Breast epithelium (tissue), 4 donors: ENCODE measurements at regions of chr10 and their contacts with region 1.

Region 1: DNA sequence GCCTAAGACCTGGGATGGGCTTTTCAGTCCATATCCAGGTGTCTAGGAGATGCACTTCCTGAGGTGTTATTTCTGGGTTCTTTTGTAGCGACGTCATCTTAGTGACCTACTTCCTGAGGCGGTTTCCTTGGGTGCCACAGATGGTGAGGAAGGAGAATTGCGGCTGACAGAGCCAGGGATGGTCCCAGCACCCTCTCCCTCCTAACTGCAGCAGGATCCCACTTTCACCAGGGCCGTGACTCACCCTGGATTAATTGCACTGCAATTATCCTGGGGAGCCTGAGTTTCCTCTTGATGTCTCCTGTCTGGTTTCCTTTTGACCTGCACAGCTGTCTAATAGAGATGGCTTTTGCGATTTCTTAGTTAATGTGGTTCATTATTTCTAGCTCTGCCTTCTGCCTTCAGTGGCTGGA is 271.7 kb downstream of the TCF7L2 start:
- DNase-seq: no peak
- H3K4me3 ChIP-seq: no peak overlapping the region
- H3K27ac ChIP-seq: no peak overlapping the region
- H3K4me1 ChIP-seq: no peaks in the 10 kb centered on the region
- H3K27me3 ChIP-seq: no peaks in the 10 kb centered on the region
- CTCF ChIP-seq: no peak
- POLR2A ChIP-seq: no peak

Region 2: GRCh38 chr10:112859763-112860162 is 362.0 kb before region 1 on chr10:
- intact Hi-C with region 1: no loop called
- DNase-seq: no peak
- H3K4me3 ChIP-seq: no peak overlapping the region
- H3K27ac ChIP-seq: no peak overlapping the region
- H3K4me1 ChIP-seq: no peaks in the 10 kb centered on the region
- H3K27me3 ChIP-seq: no peaks in the 10 kb centered on the region
- CTCF ChIP-seq: no peak
- POLR2A ChIP-seq: no peak

Region 3: DNA sequence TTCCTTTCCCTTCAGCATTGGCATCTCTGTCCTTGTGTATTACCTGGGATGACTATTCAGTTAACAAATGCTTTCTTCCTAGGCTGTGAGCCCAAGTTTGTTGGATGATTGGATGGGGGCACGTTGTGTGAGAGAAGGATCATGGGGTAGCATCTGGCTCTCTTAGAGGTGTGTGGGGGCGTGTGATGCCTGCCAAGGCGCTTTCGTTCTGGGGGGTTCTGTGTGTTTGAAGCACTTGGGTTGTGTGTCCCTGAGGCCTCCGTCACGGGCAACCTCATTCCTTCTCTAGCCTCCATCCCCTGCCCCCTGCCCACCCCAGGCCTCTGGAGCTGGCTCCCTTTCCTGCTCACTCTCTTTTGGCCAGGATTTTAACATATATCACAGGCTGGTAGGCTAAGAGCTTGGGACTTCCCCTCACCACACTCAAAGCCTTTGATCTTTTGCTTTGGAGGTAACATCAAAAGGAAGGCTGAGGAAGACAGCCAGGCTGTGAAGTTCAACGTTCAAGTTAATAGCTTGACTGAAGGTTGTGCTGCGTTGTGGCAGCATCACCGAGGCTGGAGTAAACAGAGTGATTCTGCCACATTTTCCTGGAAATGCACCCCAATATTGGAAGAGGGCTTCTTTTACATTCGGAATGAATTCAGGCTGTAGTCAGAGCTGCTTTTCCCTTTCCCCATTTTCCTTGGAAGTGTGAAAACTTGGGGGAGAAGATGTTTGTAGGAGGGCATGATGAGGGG is 214.6 kb before region 1 on chr10:
- intact Hi-C with region 1: no loop called
- DNase-seq: no peak
- H3K4me3 ChIP-seq: peak overlapping the region in 1 of 3 donors; percentile 30
- H3K27ac ChIP-seq: peak overlapping the region; percentile 48 to 77
- H3K4me1 ChIP-seq: peaks cover 7 to 27% of the 10 kb centered on the region in 2 donors
- H3K27me3 ChIP-seq: no peaks in the 10 kb centered on the region
- CTCF ChIP-seq: no peak
- POLR2A ChIP-seq: no peak

Region 4: DNA sequence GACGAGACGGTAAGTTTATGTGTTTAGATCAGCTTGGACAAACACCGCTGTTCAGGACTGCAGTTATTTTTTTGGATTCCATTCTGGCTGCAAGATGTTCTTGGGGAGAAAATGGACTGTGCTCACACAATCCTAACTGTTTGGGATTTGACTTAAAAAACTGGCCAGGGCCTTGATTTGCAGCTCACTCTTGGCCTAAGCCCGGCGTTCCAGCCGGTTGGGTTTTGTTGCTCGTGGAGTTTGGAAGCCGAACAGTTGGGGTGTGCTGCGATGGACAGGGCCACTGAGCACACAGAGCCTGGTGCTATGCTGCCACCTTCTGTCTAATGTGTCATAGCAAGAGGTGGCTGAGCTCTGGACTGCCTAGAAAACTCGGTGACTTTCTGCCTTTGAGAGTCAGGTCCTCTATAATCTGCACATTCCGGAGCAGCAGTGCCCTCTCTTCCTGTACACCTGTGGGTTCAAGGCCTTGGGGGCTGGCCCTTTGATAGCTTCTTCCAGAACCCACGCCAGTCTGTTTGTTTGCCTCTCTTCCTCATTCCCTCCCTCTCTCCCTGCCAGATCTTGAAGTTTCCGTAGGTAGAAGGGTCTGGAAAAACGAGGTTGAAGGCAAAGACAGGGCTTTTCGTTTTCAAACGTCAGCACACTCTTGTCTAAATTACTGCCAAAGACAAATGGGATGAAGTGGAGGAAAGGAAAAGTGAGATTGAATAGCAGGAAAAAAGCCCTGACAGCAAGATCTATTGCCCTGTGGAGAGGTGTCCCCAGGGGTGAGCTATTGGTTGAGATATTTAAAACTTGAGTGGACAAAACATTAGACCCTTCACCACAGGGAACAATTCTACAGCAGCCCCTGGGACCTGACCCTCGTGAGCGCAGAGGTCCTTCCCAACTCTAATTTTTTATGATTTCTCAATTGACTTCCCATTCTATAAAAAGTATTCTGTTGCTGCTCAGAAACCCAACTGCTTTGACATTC is 163.5 kb after region 1 on chr10:
- intact Hi-C with region 1: loop called (anchors 2 kb)
- DNase-seq: peak; percentile 79 to 85
- H3K4me3 ChIP-seq: no peak overlapping the region
- H3K27ac ChIP-seq: peak overlapping the region; percentile 40 to 49
- H3K4me1 ChIP-seq: no peaks in the 10 kb centered on the region
- H3K27me3 ChIP-seq: no peaks in the 10 kb centered on the region
- CTCF ChIP-seq: peak; percentile 36 to 88 (median 88)
- POLR2A ChIP-seq: no peak